PC-9 (cell line): ENCODE measurements at regions of chrX and their contacts with region 1.

Region 1: GRCh38 chrX:17496407-17496806 is 121.4 kb downstream of the NHS start:
- DNase-seq: peak; percentile 38 to 73
- H3K4me3 ChIP-seq: no peak overlapping the region
- H3K27ac ChIP-seq: peak overlapping the region; percentile 47
- H3K4me1 ChIP-seq: peaks cover 81% of the 10 kb centered on the region
- H3K27me3 ChIP-seq: no peaks in the 10 kb centered on the region
- CTCF ChIP-seq: no peak

Region 2: GRCh38 chrX:17370191-17370590 is 126.2 kb before region 1 on chrX:
- CTCF ChIA-PET with region 1: no interaction called
- POLR2A ChIA-PET with region 1: no interaction called
- intact Hi-C with region 1: no loop called
- DNase-seq: no peak
- H3K4me3 ChIP-seq: no peak overlapping the region
- H3K27ac ChIP-seq: no peak overlapping the region
- H3K4me1 ChIP-seq: no peaks in the 10 kb centered on the region
- H3K27me3 ChIP-seq: no peaks in the 10 kb centered on the region
- CTCF ChIP-seq: no peak

Region 3: GRCh38 chrX:17584248-17584681 is 87.9 kb after region 1 on chrX:
- CTCF ChIA-PET with region 1: no interaction called
- POLR2A ChIA-PET with region 1: interaction called, 10 read pairs
- intact Hi-C with region 1: no loop called
- DNase-seq: peak; percentile 36 to 67
- H3K4me3 ChIP-seq: no peak overlapping the region
- H3K27ac ChIP-seq: peak overlapping the region; percentile 60
- H3K4me1 ChIP-seq: peaks cover 22% of the 10 kb centered on the region
- H3K27me3 ChIP-seq: no peaks in the 10 kb centered on the region
- CTCF ChIP-seq: no peak